ENCODE measurements at regions of chr4 and their contacts with region 1.

Region 1: DNA sequence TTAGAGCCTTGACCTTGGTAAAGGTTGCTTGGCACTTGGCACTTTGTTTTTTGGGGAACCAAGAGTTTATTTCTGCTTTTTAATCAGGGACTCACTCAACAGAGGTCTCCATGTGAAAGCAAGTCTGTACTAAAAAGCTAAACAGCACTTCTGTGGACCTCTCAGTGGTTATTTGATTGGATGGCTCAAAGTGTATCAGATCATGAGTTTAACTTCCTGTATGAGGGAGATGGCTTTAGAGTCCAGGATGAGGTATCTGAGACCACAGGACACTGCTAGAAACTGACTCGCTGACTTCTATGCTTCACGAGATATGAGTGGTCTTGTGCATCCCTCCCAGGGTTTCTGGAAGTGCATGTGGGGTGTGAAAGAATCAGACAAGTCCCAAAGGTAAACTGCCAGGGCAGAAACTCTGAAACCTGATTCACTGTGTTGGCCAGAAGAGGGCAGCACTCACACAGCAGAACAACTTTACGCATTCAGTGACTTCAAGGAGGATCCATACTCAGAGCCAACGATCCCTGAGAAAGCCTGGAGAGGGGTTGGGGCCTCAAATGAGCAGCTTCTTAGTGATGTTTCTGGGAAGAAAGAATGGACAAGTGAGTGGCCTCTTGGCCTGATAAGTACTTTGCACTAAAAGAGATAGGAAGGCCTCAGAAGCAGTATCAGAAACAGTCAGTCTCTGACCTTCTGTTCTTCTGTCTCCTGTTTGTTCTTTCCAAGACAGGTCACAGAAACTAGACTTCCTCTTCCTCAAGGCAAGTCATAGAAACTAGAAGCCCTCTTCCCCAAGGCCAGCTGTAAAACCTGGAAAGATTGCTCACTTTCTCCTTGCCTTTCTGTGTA is 220.3 kb upstream of the CXCL13 start:
- DNase-seq: peak; percentile 70
- H3K4me3 ChIP-seq: no peak overlapping the region
- H3K27ac ChIP-seq: no peak overlapping the region
- H3K4me1 ChIP-seq: peaks cover 0 to 4% (median 0%) of the 10 kb centered on the region in 4 donors
- H3K27me3 ChIP-seq: no peaks in the 10 kb centered on the region
- CTCF ChIP-seq: peak; percentile 33 to 77 (median 74)
- EP300 ChIP-seq: no peak
- POLR2A ChIP-seq: no peak

Region 2: DNA sequence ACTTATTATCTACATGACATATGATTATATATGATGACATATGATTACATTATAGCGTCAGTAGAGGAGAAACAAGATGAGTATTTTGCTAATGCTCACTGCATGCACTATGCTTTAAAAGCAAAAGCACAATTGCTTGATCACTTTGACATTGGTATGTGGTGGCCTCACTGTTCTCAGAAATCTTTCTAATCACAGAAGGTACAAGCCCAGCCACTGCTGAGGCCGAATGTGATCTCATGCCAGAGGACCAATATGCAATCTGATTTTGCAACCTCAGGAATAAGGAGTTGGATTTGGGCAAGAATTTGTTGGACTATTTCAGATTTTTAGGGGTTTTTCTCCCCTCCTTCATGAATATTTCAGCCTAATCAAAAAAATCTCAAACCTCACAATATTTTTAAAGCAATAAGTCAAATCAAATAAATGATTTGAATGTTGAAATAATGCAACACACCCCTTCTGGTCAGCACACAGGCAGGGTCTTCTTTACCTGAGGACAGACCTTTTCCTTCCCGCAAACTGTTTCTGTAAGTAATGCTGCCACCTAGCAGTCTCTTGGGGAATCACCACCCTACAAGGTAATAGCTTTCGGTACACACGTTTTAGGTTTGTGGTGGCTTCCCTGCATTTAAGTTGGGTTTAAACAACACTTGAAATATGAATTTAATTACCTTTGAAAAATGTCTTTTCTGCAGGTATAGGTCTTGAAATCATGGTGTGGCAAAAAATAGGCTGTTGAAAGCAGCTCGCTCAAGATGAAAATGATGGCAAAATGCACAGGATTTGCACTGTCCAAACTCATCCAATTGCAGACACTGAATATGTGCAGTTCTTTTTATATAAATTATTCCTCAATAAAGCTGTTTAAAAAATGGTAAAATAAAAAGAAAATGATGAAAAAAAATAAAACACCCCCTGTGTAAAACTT is 215.4 kb after region 1 on chr4:
- intact Hi-C with region 1: loop called (anchors 2 kb)
- DNase-seq: no peak
- H3K4me3 ChIP-seq: no peak overlapping the region
- H3K27ac ChIP-seq: no peak overlapping the region
- H3K4me1 ChIP-seq: no peaks in the 10 kb centered on the region
- H3K27me3 ChIP-seq: no peaks in the 10 kb centered on the region
- CTCF ChIP-seq: peak; percentile 18 to 75 (median 59)
- EP300 ChIP-seq: no peak
- POLR2A ChIP-seq: no peak

Region 3: DNA sequence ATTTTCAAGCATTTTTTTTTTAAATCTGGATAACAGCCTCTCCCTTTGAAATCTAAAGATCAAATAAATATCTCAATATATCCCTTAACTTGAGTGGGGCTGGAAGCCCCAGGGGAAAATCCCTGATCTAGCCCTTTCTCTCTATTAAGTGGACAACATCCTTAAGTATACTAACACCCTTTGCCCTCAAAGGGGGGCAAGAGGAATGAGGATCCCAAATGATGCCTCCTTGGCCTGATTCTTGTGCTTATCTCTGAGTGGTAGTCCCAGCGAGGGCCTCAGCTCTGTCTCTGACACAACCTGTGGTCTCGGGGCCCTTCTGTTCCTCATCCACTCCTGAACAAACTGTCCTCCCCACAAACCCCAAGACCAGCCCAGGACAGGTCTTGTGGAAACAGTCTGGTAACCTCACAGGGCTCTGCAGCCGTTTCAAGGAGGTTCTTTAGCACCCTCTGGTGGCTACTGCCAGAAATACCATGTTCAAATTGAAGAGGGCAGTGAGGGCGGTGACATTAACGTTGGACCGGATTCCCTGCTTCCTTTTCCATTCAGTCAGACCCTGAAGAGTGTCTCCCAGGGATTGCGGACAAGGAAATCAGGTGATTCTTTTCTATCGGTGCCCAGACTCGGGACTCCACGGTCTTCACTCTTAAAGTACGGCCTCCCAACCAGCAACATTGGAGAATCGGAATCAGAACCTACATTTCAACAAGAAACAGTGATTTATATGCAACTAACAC is 233.2 kb after region 1 on chr4:
- intact Hi-C with region 1: loop called (anchors 2 kb)
- DNase-seq: peak; percentile 77
- H3K4me3 ChIP-seq: no peak overlapping the region
- H3K27ac ChIP-seq: no peak overlapping the region
- H3K4me1 ChIP-seq: peaks cover 0 to 4% (median 0%) of the 10 kb centered on the region in 4 donors
- H3K27me3 ChIP-seq: no peaks in the 10 kb centered on the region
- CTCF ChIP-seq: peak in 3 of 4 experiments; percentile 65 to 67 (median 65)
- EP300 ChIP-seq: no peak
- POLR2A ChIP-seq: no peak

Region 4: GRCh38 chr4:77697860-77698590 is 312.7 kb after region 1 on chr4:
- intact Hi-C with region 1: loop called (anchors 2 kb)
- DNase-seq: no peak
- H3K4me3 ChIP-seq: peak overlapping the region in 1 of 4 donors; percentile 12
- H3K27ac ChIP-seq: peak overlapping the region in 2 of 4 donors; percentile 58 to 67
- H3K4me1 ChIP-seq: peaks cover 0 to 19% (median 12%) of the 10 kb centered on the region in 4 donors
- H3K27me3 ChIP-seq: no peaks in the 10 kb centered on the region
- CTCF ChIP-seq: peak in 2 of 4 experiments; percentile 14 to 33
- EP300 ChIP-seq: no peak
- POLR2A ChIP-seq: no peak

Region 5: DNA sequence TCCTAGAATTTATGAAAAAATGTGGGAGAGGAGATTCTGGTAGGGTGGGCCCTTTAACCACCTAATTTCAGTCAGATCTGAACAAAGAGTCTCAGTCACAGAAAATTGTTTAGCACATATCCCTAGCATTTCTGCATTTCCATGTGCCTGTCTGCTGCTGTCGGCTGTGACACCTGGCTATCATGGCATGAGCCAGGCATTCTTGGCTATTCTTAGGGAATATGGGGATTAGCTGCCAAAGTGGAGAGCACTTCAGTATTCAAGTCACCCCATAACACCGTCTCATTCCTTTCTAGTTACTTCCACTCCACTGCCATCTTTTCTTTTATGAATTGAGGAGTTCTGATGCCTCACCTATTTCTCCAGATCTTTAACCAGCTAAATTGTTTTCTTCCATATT is 883.2 kb after region 1 on chr4:
- intact Hi-C with region 1: no loop called
- DNase-seq: no peak
- H3K4me3 ChIP-seq: no peak overlapping the region
- H3K27ac ChIP-seq: no peak overlapping the region
- H3K4me1 ChIP-seq: no peaks in the 10 kb centered on the region
- H3K27me3 ChIP-seq: no peaks in the 10 kb centered on the region
- CTCF ChIP-seq: no peak
- EP300 ChIP-seq: no peak
- POLR2A ChIP-seq: no peak

Measured in sigmoid colon (tissue), 7 donors.